H1 (cell line): ENCODE measurements at regions of chr3 and their contacts with region 1.

Region 1: DNA sequence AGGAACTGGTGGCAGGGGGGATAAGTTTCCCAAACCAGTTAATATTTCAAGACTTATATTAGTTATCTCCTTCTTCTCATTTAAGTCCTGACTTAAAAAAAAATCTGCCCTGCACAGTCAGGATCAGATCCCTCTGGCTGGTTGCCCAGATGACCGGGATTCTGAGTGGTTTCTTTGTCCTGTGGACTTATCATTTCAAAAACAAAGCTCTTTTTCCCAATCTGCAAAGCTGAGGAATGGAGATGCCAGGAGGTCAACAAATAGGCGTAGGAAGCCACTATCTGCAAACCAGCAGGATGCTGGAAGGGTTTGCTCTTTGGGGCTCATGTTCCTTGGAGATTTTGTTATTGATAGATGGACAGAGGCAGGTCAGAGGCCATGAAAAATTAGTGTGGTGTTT is 5.8 kb downstream of the C3orf20 start:
- DNase-seq: no peak
- H3K4me3 ChIP-seq: no peak overlapping the region
- H3K27ac ChIP-seq: no peak overlapping the region
- H3K4me1 ChIP-seq: no peaks in the 10 kb centered on the region
- H3K27me3 ChIP-seq: no peaks in the 10 kb centered on the region
- CTCF ChIP-seq: no peak
- EP300 ChIP-seq: no peak
- POLR2A ChIP-seq: no peak
- RAD21 ChIP-seq: no peak

Region 2: DNA sequence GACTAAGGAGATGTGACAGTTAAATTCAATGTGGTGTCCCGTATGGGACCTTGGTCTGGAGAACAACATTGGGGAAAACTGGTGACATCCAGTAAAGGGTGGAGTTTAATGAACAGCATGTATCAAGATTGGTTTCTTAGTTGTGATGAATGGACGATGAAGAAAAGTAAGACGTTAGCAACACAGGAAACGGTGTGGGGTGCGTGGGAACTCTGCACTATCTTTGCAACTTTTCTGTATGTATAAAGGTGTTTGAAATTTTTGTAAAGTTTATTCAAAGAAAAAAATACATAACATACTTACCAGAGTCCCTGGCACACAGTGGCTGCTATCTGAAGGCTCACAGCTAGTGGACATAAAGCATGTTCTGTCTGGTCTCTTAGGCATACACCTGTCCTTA is 35.3 kb before region 1 on chr3:
- CTCF ChIA-PET with region 1: no interaction called
- POLR2A ChIA-PET with region 1: no interaction called
- DNase-seq: no peak
- H3K4me3 ChIP-seq: no peak overlapping the region
- H3K27ac ChIP-seq: no peak overlapping the region
- H3K4me1 ChIP-seq: no peaks in the 10 kb centered on the region
- H3K27me3 ChIP-seq: no peaks in the 10 kb centered on the region; a peak in 1 of 7 replicates
- CTCF ChIP-seq: no peak
- EP300 ChIP-seq: no peak
- POLR2A ChIP-seq: no peak
- RAD21 ChIP-seq: no peak

Region 3: DNA sequence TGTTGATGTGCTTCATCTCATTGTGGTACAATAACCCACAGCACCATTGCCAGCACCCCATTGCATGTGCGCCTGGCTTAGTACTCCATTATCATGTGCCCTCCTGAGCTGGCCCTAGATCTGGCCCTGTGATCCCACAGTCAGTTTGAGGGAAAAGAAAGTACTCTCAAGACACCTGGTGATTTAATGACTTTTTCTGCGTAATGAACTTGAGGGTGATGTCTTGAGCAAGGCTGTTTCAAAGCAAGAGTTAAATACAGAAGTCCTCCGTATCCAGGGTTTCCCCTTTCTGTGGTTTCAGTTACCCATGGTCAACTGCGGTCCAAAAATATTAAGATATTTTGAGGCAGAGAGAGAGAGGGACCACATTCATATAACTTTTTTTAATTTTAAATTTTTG is 10.5 kb after region 1 on chr3:
- CTCF ChIA-PET with region 1: interaction called, 44 read pairs
- POLR2A ChIA-PET with region 1: interaction called, 3 read pairs
- DNase-seq: no peak
- H3K4me3 ChIP-seq: no peak overlapping the region
- H3K27ac ChIP-seq: no peak overlapping the region
- H3K4me1 ChIP-seq: no peaks in the 10 kb centered on the region
- H3K27me3 ChIP-seq: no peaks in the 10 kb centered on the region; a peak in 1 of 7 replicates
- CTCF ChIP-seq: no peak
- EP300 ChIP-seq: no peak
- POLR2A ChIP-seq: no peak
- RAD21 ChIP-seq: no peak

Region 4: DNA sequence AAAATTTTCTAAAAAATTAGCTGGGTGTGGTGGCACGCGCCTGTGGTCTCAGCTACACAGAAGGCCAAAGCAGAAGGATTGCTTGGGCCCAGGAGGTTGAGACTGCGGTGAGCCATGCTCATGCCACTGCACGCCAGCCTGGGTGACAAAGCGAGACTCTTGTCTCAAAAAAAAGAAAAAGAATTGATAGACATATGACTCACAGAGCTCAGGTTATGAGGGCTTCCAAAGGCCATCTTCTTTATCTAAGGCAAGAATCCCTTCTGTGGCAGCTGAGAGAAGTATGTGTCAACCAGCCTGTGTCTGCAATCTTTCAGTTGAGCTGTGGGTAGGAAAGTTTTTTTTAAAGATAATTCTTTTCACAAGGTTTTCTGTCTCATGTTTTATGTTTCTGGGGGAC is 330.5 kb after region 1 on chr3:
- CTCF ChIA-PET with region 1: no interaction called
- POLR2A ChIA-PET with region 1: no interaction called
- DNase-seq: no peak
- H3K4me3 ChIP-seq: no peak overlapping the region
- H3K27ac ChIP-seq: no peak overlapping the region
- H3K4me1 ChIP-seq: no peaks in the 10 kb centered on the region
- H3K27me3 ChIP-seq: no peaks in the 10 kb centered on the region
- CTCF ChIP-seq: no peak
- EP300 ChIP-seq: no peak
- POLR2A ChIP-seq: no peak
- RAD21 ChIP-seq: no peak